ENCODE measurements at regions of chr7 and their contacts with region 1.

Region 1: DNA sequence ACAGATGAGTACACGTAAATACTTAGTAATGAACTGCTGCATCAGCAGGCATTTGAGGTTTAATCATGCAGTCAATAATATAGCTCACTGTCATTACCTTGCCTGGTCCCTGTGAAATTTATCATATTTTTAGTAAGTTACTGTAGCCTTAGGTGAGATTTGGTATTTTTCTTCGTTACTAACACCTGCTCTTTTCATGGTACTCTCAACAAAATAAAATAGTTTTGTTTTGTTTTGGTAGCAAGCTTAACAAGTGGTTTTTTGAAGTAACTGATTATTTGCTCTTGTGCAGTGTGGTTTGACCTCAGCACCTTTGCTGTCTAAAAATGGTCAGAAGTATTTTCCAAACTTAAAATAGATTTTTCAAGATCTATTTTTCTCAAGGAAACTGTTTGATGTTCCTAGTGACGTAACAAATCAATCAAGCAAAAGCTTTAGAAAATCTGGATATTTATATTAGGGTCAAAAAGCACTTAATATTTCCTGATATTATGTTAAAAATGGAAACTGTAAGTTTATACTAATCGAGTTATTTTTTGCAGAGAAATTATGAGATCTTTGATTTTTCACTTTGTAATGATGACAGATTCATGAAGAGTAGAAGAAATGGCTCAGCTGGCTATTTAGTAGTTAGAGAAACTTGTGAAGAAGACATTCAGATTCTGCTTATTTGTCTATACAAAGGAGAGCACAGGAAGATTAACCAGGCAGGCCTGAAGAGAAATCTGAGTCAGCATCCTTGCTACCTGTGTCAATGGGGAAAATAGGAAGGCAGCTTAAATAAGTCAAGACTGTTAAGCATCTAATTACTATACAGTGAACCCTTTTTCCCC is 21.0 kb upstream of the RPA3 start:
- DNase-seq: no peak
- ATAC-seq: no peak
- H3K4me3 ChIP-seq: no peak overlapping the region
- H3K27ac ChIP-seq: no peak overlapping the region
- H3K4me1 ChIP-seq: peaks cover 0 to 18% (median 0%) of the 10 kb centered on the region in 12 donors
- H3K27me3 ChIP-seq: no peaks in the 10 kb centered on the region
- CTCF ChIP-seq: no peak
- POLR2A ChIP-seq: no peak

Region 2: DNA sequence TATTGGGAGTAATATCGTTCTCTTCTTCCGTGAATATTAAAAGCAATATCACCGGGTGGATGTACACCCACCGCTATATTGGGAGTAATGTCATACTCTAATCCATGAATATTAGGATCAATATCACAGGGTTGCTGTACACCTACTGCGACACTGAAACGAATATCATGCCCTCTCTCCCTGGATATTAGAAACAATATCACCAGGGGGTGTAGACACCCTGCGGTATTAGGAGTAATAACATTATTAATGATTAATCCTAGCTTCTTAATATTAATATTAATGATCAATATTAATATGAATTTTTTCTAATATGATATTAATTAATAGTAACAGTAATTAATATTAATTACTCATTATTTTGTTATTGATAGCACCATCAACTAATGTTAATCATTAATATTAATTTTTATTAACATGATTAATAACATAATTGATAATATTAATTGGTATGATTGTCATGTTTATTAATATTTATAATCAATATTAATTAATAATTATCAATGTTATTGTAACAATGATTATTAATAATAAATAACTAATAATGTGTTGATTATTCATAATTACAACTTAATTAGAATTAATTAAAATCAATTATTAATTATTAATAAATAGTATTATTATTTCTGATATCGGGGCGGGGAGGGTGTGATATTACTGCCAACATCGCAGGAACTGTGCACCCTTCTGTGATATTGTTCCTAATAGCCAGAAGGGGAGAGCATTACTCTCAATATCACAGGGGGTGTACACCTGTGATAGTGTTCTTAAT is 678.4 kb before region 1 on chr7:
- intact Hi-C with region 1: no loop called
- DNase-seq: no peak
- ATAC-seq: no peak
- H3K4me3 ChIP-seq: no peak overlapping the region
- H3K27ac ChIP-seq: no peak overlapping the region
- H3K4me1 ChIP-seq: no peaks in the 10 kb centered on the region
- H3K27me3 ChIP-seq: no peaks in the 10 kb centered on the region
- CTCF ChIP-seq: no peak
- POLR2A ChIP-seq: no peak

Region 3: DNA sequence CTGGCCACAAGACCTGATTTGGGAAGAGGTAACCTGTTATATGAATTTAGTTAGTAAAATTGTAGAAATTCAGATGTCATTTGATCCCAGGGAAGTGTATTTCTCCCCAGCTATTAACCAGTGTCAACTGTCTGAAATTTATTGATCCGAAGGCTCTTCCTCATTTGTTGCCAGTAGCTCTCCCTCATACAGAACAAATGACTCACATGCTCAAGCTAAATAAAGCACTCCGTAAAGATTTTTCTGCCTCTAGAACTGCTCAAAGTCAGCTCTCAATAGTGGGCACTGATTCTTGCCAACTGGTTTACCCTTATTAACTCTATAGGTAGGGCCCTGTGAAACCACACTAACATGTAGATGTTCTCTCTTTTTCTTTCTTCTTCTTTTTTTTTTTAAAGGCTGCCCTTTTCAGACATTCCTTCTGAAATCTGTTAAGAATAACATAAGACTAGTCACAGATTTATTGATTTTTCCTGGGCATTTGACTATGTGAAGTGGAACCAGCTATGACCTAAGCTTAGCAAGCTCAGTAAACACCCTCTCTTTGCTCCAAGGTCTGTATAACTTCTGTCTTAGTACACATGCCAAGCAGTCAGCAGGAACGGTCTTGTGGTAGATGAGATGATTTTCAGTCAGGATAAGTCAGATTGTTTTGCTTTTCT is 42.8 kb before region 1 on chr7:
- intact Hi-C with region 1: loop called in 3 of 10 experiments (anchors 5 kb)
- DNase-seq: no peak
- ATAC-seq: peak in 2 of 4 donors; percentile 45 to 56
- H3K4me3 ChIP-seq: no peak overlapping the region
- H3K27ac ChIP-seq: peak overlapping the region; percentile 15 to 79 (median 62)
- H3K4me1 ChIP-seq: peaks cover 0 to 68% (median 48%) of the 10 kb centered on the region in 12 donors
- H3K27me3 ChIP-seq: no peaks in the 10 kb centered on the region
- CTCF ChIP-seq: no peak
- POLR2A ChIP-seq: no peak

Region 4: DNA sequence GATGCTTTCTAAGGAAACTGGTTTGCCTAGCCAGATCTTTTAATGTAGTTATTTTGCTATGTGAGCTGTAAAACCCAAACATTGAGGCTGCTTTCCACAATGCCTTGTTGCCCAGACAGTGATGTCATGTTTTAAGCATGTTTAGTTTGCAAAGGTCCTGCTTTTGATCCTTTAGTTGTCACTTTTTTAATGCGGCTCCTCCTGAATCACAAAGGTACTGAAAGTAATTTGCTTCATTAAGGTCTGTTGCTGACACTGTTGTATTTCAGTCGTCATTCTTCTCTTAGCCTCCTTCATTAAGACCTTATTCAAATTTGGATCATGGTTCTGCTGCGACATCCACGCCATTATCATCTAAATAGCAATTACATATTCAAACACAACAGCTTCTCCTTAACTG is 31.6 kb before region 1 on chr7:
- intact Hi-C with region 1: loop called in 2 of 10 experiments (anchors 5 kb)
- DNase-seq: no peak
- ATAC-seq: peak in 1 of 4 donors; percentile 12
- H3K4me3 ChIP-seq: no peak overlapping the region
- H3K27ac ChIP-seq: peak overlapping the region in 1 of 12 donors; percentile 21
- H3K4me1 ChIP-seq: peaks cover 0 to 44% (median 28%) of the 10 kb centered on the region in 12 donors
- H3K27me3 ChIP-seq: no peaks in the 10 kb centered on the region
- CTCF ChIP-seq: no peak
- POLR2A ChIP-seq: no peak

Region 5: GRCh38 chr7:7808156-7808555 is 68.7 kb after region 1 on chr7:
- intact Hi-C with region 1: no loop called
- DNase-seq: no peak
- ATAC-seq: no peak
- H3K4me3 ChIP-seq: no peak overlapping the region
- H3K27ac ChIP-seq: no peak overlapping the region
- H3K4me1 ChIP-seq: no peaks in the 10 kb centered on the region
- H3K27me3 ChIP-seq: no peaks in the 10 kb centered on the region
- CTCF ChIP-seq: no peak
- POLR2A ChIP-seq: no peak